A549 (cell line): ENCODE measurements at regions of chr14 and their contacts with region 1.

Region 1: DNA sequence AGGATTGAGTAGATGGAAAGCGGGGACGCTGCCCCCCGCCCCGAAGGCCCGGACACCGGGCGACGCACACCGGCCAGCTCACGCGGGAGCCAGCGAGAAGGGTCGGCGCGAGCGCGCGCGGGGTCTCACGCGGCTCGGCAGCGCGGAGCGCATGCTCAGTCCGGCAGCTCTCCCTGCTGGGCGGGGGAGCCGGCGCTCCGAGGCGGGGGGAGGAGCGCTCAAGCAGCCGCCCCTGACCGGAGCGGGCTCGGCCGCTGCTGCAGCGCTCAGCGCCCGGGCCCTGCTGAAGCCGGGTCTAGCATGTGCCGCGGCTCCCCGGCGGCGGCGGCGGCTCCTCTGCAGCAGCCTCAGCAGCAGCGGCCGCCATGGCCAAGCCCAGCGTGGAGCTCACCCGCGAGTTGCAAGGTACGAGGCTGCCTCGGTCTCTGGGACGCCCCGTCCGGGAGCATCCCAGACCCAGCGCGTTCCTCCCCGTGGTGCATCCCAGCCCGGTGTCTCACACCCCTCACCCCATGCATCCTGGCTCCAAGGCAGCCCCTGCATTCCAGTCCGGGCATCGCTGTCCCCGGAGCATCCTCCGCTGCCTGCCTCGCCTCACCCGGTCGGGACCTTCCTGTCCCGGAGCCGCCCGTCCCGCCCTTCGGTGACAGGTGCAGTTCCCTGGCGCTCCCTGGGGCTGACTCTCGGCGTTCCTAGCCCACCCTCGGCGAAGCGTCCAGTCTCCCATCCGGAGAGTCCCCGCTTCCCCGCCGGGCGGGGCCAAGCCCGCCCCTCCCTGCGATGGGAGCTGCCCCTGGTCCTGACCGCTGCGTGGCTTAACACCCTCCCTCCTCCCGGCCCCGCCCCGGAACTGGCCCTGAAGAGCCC is at the start of gene CARMIL3:
- DNase-seq: peak; percentile 35 to 62
- ATAC-seq: peak; percentile 83 to 90
- H3K4me3 ChIP-seq: peak within 1 kb of the TSS; percentile 75
- H3K27ac ChIP-seq: peak within 1 kb of the TSS; percentile 84 to 88
- H3K4me1 ChIP-seq: peaks cover 10% of the 10 kb centered on the region; the same call in 2 of the 3 replicates
- CTCF ChIP-seq: no peak
- EP300 ChIP-seq: no peak
- POLR2A ChIP-seq: peak; percentile 57; the same call in 1 of the 2 replicates
- RAD21 ChIP-seq: no peak
- polyA plus RNA-seq, gene CARMIL3: 0.45 and 0.79 TPM in 2 replicates

Region 2: GRCh38 chr14:23568600-23569310 is 483.3 kb before region 1 on chr14:
- CTCF ChIA-PET with region 1: no interaction called
- POLR2A ChIA-PET with region 1: no interaction called
- DNase-seq: peak in 1 of 2 experiments; percentile 42
- ATAC-seq: peak in 1 of 2 experiments; percentile 39; a peak in 2 of 6 replicates
- H3K4me3 ChIP-seq: no peak overlapping the region
- H3K27ac ChIP-seq: peak overlapping the region; percentile 90 to 97
- H3K4me1 ChIP-seq: peaks cover 20% of the 10 kb centered on the region
- CTCF ChIP-seq: peak; percentile 24; the same call in 2 of the 3 replicates
- EP300 ChIP-seq: no peak
- POLR2A ChIP-seq: no peak
- RAD21 ChIP-seq: no peak

Region 3: DNA sequence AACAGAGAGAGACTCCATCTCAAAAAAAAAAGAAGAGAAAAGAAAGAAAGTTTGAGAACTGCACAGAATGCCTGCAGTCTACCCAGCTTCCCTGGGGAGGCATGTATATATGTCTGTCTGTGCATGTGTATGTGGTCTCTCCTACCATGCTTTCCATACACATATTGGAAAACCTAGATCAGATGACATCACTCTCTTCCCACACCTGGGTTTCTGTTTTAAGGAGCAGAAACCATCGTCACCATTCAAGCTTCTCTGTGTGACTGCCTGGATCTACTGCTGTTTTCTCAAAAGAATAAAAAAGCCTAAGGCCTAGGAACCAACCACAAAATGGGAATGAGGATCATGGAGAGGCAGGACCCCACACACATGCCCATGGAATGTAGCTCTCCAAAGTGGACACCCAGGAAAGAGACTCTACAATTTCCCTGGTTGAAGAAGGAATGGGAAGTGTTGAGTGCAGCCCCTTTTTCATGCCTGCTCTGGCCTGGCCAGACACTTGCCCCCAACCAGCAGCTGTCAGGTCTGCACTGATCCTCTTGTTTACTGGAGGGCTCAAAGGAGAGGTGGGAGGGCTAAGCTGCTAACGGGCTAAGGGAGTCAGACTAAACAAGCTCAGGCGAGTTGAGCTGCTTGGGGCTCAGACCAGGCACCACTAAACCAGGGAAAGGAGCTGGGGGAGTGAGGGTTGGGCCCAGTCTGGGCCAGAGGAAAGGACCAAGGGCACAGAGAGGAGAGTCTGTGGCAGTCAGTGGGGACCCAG is 34.4 kb after region 1 on chr14:
- CTCF ChIA-PET with region 1: interaction called, 405 read pairs
- POLR2A ChIA-PET with region 1: no interaction called
- DNase-seq: no peak
- ATAC-seq: no peak
- H3K4me3 ChIP-seq: no peak overlapping the region
- H3K27ac ChIP-seq: no peak overlapping the region
- H3K4me1 ChIP-seq: peaks cover 5% of the 10 kb centered on the region
- CTCF ChIP-seq: no peak
- EP300 ChIP-seq: no peak
- POLR2A ChIP-seq: no peak
- RAD21 ChIP-seq: no peak

Region 4: GRCh38 chr14:24093901-24094761 is 42.1 kb after region 1 on chr14 and contains the start of gene PCK2:
- CTCF ChIA-PET with region 1: interaction called, 405 read pairs
- POLR2A ChIA-PET with region 1: interaction called, 13 read pairs
- DNase-seq: peak; percentile 95 to 97
- ATAC-seq: peak; percentile 93 to 94
- H3K4me3 ChIP-seq: peak within 1 kb of the TSS; percentile 70
- H3K27ac ChIP-seq: peak within 1 kb of the TSS; percentile 95 to 100
- H3K4me1 ChIP-seq: peaks cover 18% of the 10 kb centered on the region
- CTCF ChIP-seq: no peak
- EP300 ChIP-seq: no peak
- POLR2A ChIP-seq: peak; percentile 95
- RAD21 ChIP-seq: no peak
- polyA plus RNA-seq, gene PCK2: 52.1 and 60.2 TPM in 2 replicates

Region 5: GRCh38 chr14:24299255-24300195 is 247.5 kb after region 1 on chr14 and contains the starts of genes DHRS1 and NOP9:
- CTCF ChIA-PET with region 1: interaction called, 14 read pairs
- POLR2A ChIA-PET with region 1: no interaction called
- DNase-seq: peak; percentile 87 to 91
- ATAC-seq: peak; percentile 62 to 82
- H3K4me3 ChIP-seq: peak within 1 kb of the TSS; percentile 81
- H3K27ac ChIP-seq: peak within 1 kb of the TSS; percentile 82 to 92
- H3K4me1 ChIP-seq: peaks cover 15% of the 10 kb centered on the region; the same call in 2 of the 3 replicates
- CTCF ChIP-seq: no peak
- EP300 ChIP-seq: no peak
- POLR2A ChIP-seq: peak; percentile 61
- RAD21 ChIP-seq: no peak
- polyA plus RNA-seq, gene DHRS1: 17.4 and 17.9 TPM in 2 replicates
- polyA plus RNA-seq, gene NOP9: 16.5 and 23.6 TPM in 2 replicates